ENCODE measurements at regions of chr16 and their contacts with region 1.

Region 1: DNA sequence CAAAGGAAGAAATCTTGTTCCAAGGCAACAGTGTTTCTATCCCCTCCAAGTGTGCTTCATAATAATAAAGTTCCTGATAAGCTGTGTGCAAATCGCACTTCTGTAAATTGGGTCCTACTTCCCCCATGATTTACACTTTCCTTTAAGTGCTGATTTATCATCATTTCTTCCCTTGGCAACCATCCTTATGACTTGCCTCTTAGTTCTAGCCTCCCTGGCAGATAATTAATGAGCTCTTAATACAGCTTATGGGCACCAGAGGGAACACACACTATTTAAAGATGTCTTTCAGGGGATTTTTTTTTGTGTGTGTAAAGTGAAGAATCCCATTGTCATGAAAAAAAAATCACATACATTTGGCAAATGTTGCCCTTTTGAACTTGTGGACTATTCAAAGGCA is 101.6 kb upstream of the MPHOSPH6 start:
- DNase-seq: no peak
- H3K4me3 ChIP-seq: no peak overlapping the region
- H3K27ac ChIP-seq: no peak overlapping the region
- H3K4me1 ChIP-seq: no peaks in the 10 kb centered on the region
- H3K27me3 ChIP-seq: no peaks in the 10 kb centered on the region
- CTCF ChIP-seq: no peak
- POLR2A ChIP-seq: no peak

Region 2: GRCh38 chr16:82181456-82182185 is 90.0 kb before region 1 on chr16:
- intact Hi-C with region 1: no loop called
- DNase-seq: no peak
- H3K4me3 ChIP-seq: no peak overlapping the region
- H3K27ac ChIP-seq: no peak overlapping the region
- H3K4me1 ChIP-seq: no peaks in the 10 kb centered on the region
- H3K27me3 ChIP-seq: no peaks in the 10 kb centered on the region
- CTCF ChIP-seq: no peak
- POLR2A ChIP-seq: no peak

Region 3: DNA sequence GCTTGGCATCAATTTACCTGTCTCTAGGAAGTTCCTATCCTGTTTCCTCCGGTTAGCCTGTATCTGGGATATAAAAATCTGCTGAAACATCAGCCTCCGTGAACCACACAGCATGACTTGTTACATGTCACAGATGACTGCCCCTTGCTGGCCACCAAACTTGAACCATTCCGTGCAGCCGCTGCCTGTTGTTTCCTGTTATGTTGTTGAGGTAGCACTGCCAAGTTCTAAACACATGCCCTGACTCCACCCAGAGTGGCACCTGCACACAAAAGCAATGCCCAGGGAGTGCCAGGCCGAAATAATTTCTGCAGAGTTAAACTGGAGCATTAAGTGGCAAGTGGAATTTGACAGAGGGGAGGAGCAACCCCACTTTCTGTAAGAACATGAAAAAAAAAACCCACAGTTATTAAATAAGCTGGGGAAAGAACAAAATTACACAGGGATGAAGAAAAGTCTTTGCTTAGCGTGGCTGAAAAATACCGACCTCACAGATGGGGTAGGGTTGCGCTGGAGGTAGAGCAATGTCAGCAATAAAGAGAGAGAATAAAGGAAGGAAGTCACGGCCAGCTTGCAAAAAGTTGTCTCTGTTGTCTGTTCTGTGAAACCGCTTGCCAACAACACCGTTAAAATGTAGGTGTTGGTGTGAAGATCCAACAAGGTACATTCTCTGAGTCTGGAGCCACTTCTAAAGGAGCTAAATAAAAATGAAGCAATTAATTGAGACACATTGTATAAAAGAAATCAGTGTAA is 180.5 kb after region 1 on chr16:
- intact Hi-C with region 1: loop called (anchors 2 kb)
- DNase-seq: no peak
- H3K4me3 ChIP-seq: no peak overlapping the region
- H3K27ac ChIP-seq: no peak overlapping the region
- H3K4me1 ChIP-seq: no peaks in the 10 kb centered on the region
- H3K27me3 ChIP-seq: no peaks in the 10 kb centered on the region
- CTCF ChIP-seq: no peak
- POLR2A ChIP-seq: no peak

Region 4: DNA sequence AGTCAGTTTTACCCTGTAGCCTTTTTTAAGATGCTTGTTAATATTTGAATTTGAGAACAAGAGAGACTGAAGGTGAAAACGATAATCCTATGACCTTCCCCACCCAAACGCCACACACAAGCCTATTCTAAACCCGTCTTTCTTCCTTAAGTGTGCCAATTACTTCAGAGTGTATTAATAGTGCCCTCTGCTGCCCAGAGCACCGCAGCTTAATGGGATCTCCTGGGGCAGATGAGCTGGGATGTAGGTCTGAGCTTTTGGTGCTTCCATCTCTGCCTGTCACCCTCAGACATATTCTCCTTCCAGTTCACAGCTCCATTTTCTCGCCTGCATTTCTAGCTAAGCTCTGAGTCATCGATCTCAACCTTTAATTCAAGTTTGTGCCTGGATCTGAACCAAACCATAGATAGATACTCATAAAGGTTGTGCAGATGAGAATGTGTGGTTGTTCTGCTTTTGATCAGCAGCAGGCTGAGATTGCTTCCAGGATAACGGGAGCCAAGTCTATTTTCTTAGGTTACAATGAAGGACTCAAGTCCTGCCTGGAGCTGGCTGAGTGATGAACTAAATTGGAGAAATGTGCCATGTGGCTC is 308.8 kb after region 1 on chr16:
- intact Hi-C with region 1: no loop called
- DNase-seq: no peak
- H3K4me3 ChIP-seq: no peak overlapping the region
- H3K27ac ChIP-seq: no peak overlapping the region
- H3K4me1 ChIP-seq: no peaks in the 10 kb centered on the region
- H3K27me3 ChIP-seq: no peaks in the 10 kb centered on the region
- CTCF ChIP-seq: peak in 1 of 3 donors; percentile 23
- POLR2A ChIP-seq: no peak

Measured in breast epithelium (tissue), 4 donors.